H1 (cell line): ENCODE measurements at regions of chr10 and their contacts with region 1.

Region 1: DNA sequence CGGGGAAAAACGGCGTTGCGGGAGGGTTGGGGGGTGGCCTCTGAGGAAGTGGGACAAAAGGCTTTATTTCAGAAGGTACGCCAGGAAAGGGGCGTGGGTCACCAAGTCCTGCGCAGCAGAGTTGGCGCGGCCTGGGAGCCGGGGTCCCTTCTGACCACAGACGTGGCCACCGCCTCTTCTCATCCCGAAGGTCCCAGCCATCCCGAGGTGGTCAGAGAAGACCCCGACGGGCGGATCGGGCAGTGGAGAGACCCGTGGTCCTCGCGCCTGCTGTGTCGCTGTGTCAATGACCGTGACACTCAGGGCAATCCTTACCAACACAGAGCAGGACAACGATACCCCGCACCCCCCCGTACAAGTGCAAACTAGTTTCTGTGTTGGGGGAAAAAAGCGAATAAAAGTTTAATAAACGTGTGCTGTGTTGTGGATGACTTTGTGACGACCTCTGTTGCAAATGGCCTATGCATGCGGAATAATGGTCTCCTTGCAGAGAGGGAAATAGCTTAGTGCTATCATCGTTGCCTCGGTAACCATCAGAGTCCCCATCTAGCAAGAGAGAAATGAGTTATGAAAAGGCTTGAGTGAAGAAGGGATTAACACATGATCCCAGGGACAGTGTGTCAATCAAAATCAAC is 19.4 kb upstream of the GATA3 start:
- DNase-seq: peak in 1 of 2 experiments; percentile 51
- H3K4me3 ChIP-seq: peak overlapping the region in 3 of 4 experiments; percentile 6 to 57 (median 14); a peak in 5 of 8 replicates
- H3K27ac ChIP-seq: no peak overlapping the region
- H3K4me1 ChIP-seq: peaks cover 7 to 22% (median 12%) of the 10 kb centered on the region in 4 experiments
- H3K27me3 ChIP-seq: peaks cover 61 to 88% (median 84%) of the 10 kb centered on the region in 4 experiments
- CTCF ChIP-seq: no peak
- EP300 ChIP-seq: no peak
- POLR2A ChIP-seq: no peak
- RAD21 ChIP-seq: no peak

Region 2: DNA sequence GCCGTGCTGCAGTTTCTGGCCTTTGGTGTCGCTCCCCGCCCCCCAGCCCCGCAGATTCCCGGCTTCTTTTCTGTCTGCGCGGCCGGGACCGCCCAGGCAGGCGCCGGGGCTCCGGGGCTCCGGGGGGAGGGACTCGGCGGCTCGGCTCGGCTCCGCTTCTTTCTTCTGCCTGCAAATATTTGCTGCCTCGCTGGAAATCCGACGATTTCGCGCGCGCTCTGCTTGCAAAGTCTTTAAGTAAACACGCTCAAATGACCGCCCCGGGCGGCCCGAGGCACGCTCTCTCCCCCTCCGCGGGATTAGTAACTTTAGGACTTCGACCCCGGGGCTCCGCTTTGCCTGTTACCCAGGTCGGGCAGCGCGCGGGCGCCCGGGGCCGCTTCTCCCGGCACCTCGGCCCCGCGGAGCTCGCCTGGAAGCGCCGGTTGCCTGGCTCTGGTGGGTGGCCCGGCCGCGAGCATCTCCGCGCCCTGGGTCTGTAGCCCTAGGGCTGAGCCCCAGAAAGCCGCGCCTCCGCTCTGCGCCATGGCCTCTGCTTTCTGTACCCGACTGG is 15.5 kb after region 1 on chr10:
- CTCF ChIA-PET with region 1: interaction called, 4 read pairs
- POLR2A ChIA-PET with region 1: interaction called, 10 read pairs
- DNase-seq: no peak
- H3K4me3 ChIP-seq: peak overlapping the region; percentile 21 to 55 (median 36); a peak in 7 of 8 replicates
- H3K27ac ChIP-seq: no peak overlapping the region
- H3K4me1 ChIP-seq: peaks cover 11 to 55% (median 28%) of the 10 kb centered on the region in 4 experiments
- H3K27me3 ChIP-seq: peaks cover 69 to 98% (median 95%) of the 10 kb centered on the region in 4 experiments
- CTCF ChIP-seq: no peak
- EP300 ChIP-seq: no peak
- POLR2A ChIP-seq: no peak
- RAD21 ChIP-seq: no peak

Region 3: GRCh38 chr10:8059959-8060703 is 25.0 kb after region 1 on chr10:
- CTCF ChIA-PET with region 1: interaction called, 13 read pairs
- POLR2A ChIA-PET with region 1: interaction called, 4 read pairs
- DNase-seq: peak in 1 of 2 experiments; percentile 51
- H3K4me3 ChIP-seq: peak overlapping the region in 2 of 4 experiments; percentile 13 to 47; a peak in 4 of 8 replicates
- H3K27ac ChIP-seq: no peak overlapping the region
- H3K4me1 ChIP-seq: peaks cover 36 to 58% (median 42%) of the 10 kb centered on the region in 4 experiments
- H3K27me3 ChIP-seq: peaks cover 65 to 99% (median 92%) of the 10 kb centered on the region in 4 experiments
- CTCF ChIP-seq: no peak
- EP300 ChIP-seq: no peak
- POLR2A ChIP-seq: no peak
- RAD21 ChIP-seq: no peak

Region 4: GRCh38 chr10:8071006-8071405 is 35.9 kb after region 1 on chr10:
- CTCF ChIA-PET with region 1: no interaction called
- POLR2A ChIA-PET with region 1: no interaction called
- DNase-seq: no peak
- H3K4me3 ChIP-seq: no peak overlapping the region
- H3K27ac ChIP-seq: no peak overlapping the region
- H3K4me1 ChIP-seq: peaks cover 0 to 3% (median 1%) of the 10 kb centered on the region in 4 experiments; a peak in 6 of 7 replicates
- H3K27me3 ChIP-seq: no peaks in the 10 kb centered on the region; a peak in 1 of 7 replicates
- CTCF ChIP-seq: no peak
- EP300 ChIP-seq: no peak
- POLR2A ChIP-seq: no peak
- RAD21 ChIP-seq: no peak

Region 5: DNA sequence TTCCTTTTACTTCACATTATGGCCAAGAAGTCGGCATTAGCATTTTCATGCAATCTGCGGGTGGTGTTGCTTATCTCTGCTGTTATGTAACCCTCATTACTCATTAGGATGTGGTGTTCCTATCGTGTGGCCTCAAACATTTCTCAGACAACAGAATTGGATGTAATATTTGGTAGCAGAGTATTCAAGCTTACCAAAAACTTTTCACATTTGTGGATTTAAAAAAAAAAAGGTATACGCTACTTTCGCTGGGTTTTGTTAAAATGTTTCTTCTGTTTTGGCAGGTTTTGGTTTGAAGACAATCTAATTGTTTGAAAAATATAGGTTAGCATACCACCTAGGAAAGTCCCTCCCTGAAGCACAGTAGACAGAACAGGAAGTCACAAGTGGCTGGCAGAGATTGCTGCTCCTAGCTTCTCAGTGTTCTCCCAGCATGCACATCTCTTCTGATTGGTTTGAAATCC is 148.2 kb after region 1 on chr10:
- CTCF ChIA-PET with region 1: no interaction called
- POLR2A ChIA-PET with region 1: no interaction called
- DNase-seq: no peak
- H3K4me3 ChIP-seq: no peak overlapping the region
- H3K27ac ChIP-seq: no peak overlapping the region
- H3K4me1 ChIP-seq: no peaks in the 10 kb centered on the region; a peak in 1 of 7 replicates
- H3K27me3 ChIP-seq: no peaks in the 10 kb centered on the region
- CTCF ChIP-seq: no peak
- EP300 ChIP-seq: no peak
- POLR2A ChIP-seq: no peak
- RAD21 ChIP-seq: no peak